WTC11 (cell line): ENCODE measurements at regions of chr3 and their contacts with region 1.

Region 1: GRCh38 chr3:157174649-157175498 is 14.9 kb upstream of the CCNL1 start:
- DNase-seq: peak; percentile 96
- ATAC-seq: peak; percentile 91
- H3K4me3 Mint-ChIP-seq: peak overlapping the region; percentile 86
- H3K27ac Mint-ChIP-seq: peak overlapping the region; percentile 99
- H3K4me1 Mint-ChIP-seq: peaks cover 11% of the 10 kb centered on the region
- H3K27me3 Mint-ChIP-seq: no peaks in the 10 kb centered on the region; the same call in 1 of the 2 replicates
- CTCF ChIP-seq: no peak

Region 2: GRCh38 chr3:157159762-157160657 is 14.9 kb before region 1 on chr3 and contains the start of gene CCNL1:
- CTCF ChIA-PET with region 1: interaction called, 19 read pairs
- POLR2A ChIA-PET with region 1: interaction called, 77 read pairs
- DNase-seq: peak; percentile 87
- ATAC-seq: peak; percentile 91
- H3K4me3 Mint-ChIP-seq: peak within 1 kb of the TSS; percentile 96
- H3K27ac Mint-ChIP-seq: peak within 1 kb of the TSS; percentile 98
- H3K4me1 Mint-ChIP-seq: peaks cover 44% of the 10 kb centered on the region
- H3K27me3 Mint-ChIP-seq: no peaks in the 10 kb centered on the region
- CTCF ChIP-seq: no peak
- total RNA-seq, gene CCNL1: 67.2 to 79.6 TPM (median 72.7 TPM) in 3 replicates

Region 3: DNA sequence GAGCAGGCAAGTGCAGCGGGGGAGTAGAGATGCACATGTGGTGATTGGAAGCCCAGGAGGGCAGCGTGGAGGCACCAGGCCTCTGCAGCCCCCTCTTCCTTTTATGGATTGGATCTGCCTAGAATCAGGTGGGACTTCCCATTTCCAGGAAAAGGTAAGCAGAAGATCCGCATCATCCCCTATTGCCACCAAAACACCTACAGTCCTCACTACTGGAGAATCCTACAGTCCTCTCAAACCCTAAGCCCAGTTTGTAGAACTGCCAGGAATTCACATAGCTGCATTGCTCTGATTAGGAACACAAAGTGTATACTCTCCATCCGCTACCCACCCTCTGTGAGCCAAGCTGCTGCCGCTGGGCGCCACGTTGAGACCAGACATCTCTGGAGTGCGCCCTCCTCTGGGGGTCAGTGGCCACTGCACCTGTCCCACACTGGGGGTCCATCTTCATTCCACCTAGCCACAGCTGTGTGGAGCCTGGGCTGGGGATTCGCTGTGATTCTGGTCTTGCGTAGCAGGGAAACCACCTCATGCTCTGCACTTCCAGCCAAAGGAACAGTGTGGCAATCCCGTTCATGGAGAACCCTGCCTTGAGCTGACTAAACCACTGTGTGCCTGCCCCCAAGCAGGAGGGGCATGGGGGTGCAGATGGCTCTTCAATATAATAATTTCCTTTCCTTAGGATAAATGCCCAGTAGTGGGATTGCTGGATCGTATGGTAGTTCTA is 172.9 kb after region 1 on chr3:
- CTCF ChIA-PET with region 1: interaction called, 12 read pairs
- POLR2A ChIA-PET with region 1: no interaction called
- DNase-seq: peak; percentile 89
- ATAC-seq: peak; percentile 100
- H3K4me3 Mint-ChIP-seq: no peak overlapping the region
- H3K27ac Mint-ChIP-seq: no peak overlapping the region
- H3K4me1 Mint-ChIP-seq: peaks cover 6% of the 10 kb centered on the region
- H3K27me3 Mint-ChIP-seq: no peaks in the 10 kb centered on the region
- CTCF ChIP-seq: peak; percentile 96